T-cell (primary cell): ENCODE measurements at regions of chr19 and their contacts with region 1.

Region 1: GRCh38 chr19:6649185-6649584 is 20.8 kb downstream of the TNFSF14 start:
- DNase-seq: no peak
- ATAC-seq: no peak
- H3K4me3 ChIP-seq: no peak overlapping the region
- H3K4me3 Mint-ChIP-seq: no peak overlapping the region
- H3K27ac ChIP-seq: no peak overlapping the region
- H3K27ac Mint-ChIP-seq: no peak overlapping the region
- H3K4me1 ChIP-seq: peaks cover 4 to 30% of the 10 kb centered on the region in 2 experiments
- H3K4me1 Mint-ChIP-seq: peaks cover 12 to 26% (median 16%) of the 10 kb centered on the region in 3 donors
- H3K27me3 ChIP-seq: no peaks in the 10 kb centered on the region
- H3K27me3 Mint-ChIP-seq: no peaks in the 10 kb centered on the region

Region 2: DNA sequence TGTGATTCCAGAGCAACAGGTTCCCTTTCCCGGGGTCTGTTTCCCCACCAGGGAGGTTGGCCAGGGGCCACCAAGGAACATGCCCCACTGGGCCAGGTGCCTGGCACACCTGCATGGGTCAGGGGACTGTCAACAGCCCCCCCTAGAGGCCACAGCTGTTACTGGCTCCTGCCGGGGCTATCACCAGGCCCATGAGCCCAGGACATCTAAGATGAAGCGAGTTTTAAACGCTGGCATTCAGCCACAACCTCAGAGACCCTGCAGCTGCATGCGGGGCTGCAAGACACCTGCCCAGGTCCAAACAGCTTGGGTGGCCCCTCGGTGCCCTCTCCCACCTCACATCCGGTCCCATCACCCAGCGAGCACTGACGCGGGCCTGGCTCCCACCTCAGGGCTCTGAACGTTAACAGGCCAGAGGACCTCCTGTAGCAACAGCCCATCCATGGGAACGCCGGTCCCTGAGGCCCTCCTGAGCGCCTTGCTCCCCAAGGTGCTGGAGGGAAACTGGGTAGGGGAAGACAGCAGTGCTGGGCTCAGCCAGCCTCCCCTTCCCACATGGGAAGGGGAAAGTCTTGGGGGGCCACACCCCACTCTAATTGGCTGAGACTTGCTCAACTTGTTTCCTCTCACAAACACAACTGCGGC is 236.6 kb before region 1 on chr19:
- CTCF ChIA-PET with region 1: no interaction called
- POLR2A ChIA-PET with region 1: no interaction called
- DNase-seq: peak in 28 of 35 experiments; percentile 16 to 66 (median 39)
- ATAC-seq: peak; percentile 59 to 76 (median 74)
- H3K4me3 ChIP-seq: no peak overlapping the region
- H3K4me3 Mint-ChIP-seq: no peak overlapping the region
- H3K27ac ChIP-seq: no peak overlapping the region
- H3K27ac Mint-ChIP-seq: no peak overlapping the region
- H3K4me1 ChIP-seq: no peaks in the 10 kb centered on the region
- H3K4me1 Mint-ChIP-seq: no peaks in the 10 kb centered on the region
- H3K27me3 ChIP-seq: no peaks in the 10 kb centered on the region
- H3K27me3 Mint-ChIP-seq: no peaks in the 10 kb centered on the region

Region 3: DNA sequence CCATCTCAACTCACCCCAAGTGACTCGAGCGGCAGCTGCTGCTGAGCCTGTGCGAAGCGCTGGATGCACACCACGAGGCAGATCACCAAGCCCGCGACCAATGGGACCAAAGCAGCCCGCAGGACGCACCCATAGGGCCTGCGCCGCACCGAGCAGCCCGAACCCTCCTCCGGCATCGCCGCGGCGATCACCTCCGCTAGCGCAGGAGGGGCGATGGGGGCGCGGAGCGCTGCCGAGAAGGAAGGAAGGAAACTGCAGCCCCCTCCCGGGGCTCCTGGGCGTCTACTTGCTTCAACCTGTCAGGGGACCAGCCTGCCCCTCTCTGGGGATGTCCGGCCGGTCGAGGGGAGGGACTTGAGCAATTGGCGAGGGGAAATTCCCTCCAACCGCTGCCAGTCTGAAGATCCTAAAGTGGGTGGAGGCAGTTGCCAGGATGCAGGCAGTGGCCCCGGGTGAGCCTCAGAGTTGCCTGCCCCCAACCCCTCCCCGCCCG is 58.3 kb before region 1 on chr19 and contains the start of gene CD70:
- CTCF ChIA-PET with region 1: interaction called in 1 of 2 experiments, 10 read pairs
- POLR2A ChIA-PET with region 1: no interaction called
- DNase-seq: peak in 33 of 35 experiments; percentile 1 to 71 (median 25)
- ATAC-seq: peak; percentile 69 to 77 (median 74)
- H3K4me3 ChIP-seq: peak within 1 kb of the TSS; percentile 47 to 62
- H3K4me3 Mint-ChIP-seq: peak within 1 kb of the TSS; percentile 71 to 83 (median 80)
- H3K27ac ChIP-seq: peak within 1 kb of the TSS; percentile 12
- H3K27ac Mint-ChIP-seq: peak within 1 kb of the TSS in 1 of 2 donors; percentile 74
- H3K4me1 ChIP-seq: peaks cover 9 to 56% of the 10 kb centered on the region in 2 experiments
- H3K4me1 Mint-ChIP-seq: peaks cover 50 to 57% (median 56%) of the 10 kb centered on the region in 3 donors
- H3K27me3 ChIP-seq: peaks cover 25 to 67% of the 10 kb centered on the region in 2 experiments
- H3K27me3 Mint-ChIP-seq: peaks cover 57 to 71% of the 10 kb centered on the region in 2 donors
- total RNA-seq, gene CD70: 1.9 to 4.3 (median 2.0) TPM